ENCODE measurements at regions of chr14 and their contacts with region 1.

Region 1: DNA sequence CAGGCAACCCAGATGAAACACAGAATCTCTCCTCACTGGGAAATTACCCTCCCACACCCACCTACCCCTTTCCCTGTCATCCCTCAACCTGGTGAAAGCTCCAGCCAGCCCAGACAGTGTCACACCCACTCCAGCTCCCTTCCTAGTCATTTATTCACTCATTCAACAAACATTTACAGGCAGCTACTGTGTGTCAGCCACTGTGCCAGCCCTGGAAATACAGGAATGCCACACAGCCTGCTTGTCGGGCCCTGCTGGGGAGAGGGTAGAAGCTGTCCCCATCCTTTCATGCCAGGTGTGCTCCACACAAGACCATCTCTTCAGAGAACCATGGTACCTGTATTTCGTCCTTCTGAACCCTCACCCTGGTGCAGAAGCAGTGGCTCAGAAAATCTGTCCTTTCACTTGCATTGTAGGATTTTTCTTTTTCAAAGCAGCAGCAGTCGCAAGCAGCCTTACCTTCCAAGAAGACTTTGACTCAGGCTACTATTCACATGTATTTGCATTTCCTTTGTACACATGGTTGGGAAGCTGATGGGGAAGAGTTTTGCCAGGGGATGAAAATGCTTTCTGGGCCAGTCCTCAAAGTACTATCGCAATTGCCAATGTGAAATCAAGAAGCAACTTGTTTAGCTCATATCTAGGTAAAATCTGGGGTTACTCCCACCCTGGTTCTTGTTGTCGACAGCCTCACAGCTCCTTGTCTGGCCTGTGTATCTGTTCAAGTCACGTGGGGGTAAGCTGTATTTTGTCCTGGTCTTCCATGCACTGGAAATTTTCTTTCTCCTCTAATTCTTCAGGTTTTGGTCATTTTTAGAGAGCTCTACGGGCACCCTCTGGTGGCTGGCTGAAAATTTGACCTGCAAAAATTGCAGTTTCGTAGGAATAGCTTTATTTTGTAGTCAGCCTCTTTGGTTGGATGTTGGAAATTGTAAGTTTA is 147.4 kb upstream of the EGLN3 start:
- DNase-seq: peak; percentile 39
- CTCF ChIP-seq: peak; percentile 61

Region 2: DNA sequence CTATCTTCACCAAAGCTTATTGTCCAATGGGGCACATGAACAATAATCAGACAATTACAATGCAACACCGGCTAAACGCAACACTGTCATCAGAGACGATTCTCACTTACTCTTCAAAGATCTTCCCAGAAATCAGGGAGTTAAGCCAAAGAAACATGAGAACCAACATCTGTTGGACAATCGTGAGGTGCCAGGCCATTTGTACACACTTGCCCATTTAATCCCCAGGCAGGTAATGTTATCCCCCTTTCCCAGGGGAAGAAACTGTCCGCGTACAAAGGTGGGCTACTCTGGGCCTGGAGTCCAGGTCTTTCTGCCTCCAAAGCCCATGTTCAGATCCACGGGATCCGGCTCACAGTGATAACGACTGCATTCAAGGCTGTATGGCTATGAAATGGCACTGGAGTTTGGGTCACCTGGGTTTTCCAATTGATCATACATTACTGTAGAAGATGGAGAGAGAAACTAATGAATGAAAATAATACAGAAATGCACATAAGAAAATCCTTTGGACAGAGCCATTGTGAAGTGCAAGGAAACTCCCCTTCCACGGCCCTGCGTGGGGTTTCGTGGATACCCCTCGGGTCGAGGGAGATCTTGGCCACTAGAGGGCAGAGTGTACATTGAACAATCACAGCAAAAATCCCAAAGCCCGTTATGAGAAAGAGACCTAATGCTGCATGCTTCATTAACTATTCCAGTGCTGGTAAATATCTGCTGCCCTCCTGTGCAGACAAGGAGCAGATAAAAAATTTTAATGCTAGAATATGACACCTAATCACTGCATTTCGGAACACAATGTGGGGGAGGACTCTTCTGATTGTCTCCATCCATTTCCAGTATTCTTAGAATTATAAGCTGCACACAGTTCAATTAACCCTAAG is 258.9 kb before region 1 on chr14:
- CTCF ChIA-PET with region 1: interaction called, 85 read pairs
- POLR2A ChIA-PET with region 1: no interaction called
- DNase-seq: peak; percentile 60
- CTCF ChIP-seq: peak; percentile 63

Region 3: DNA sequence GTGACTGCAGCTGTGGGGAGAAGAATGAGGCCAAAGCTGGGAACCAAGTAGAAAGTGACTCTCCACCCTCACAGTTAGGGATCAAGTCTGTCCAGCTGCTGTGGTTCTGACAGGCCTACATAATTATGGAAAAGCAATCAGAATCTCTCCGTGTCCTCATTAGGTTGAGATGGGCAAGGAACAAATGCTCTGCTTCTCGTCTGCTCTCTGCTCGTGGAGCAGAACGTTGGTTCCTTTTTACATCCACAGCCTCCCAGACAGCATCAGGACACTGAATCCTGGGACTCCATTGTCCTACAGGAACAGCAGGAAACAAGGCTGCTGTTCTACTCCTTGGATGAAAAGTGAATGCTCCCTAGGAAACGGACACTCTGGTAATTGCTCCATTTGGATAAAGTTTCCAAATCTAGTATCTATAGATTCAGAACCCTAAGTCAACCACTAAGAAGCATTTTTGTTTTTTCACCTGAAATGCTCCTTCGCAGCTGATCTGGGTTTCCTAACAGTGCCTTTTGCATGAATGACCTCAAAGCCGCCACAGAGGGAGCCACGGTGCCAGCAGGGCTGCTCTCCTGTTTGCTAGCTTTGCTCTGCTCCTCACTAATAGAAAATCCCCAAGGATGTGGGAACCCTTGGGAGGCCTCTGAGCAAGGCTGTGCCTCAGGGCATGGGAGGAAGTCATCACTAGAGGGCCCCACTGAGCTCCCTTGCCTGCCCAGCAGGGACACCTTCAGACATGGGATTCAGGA is 249.4 kb before region 1 on chr14:
- CTCF ChIA-PET with region 1: interaction called, 85 read pairs
- POLR2A ChIA-PET with region 1: no interaction called
- DNase-seq: peak; percentile 44
- CTCF ChIP-seq: peak; percentile 47

Region 4: DNA sequence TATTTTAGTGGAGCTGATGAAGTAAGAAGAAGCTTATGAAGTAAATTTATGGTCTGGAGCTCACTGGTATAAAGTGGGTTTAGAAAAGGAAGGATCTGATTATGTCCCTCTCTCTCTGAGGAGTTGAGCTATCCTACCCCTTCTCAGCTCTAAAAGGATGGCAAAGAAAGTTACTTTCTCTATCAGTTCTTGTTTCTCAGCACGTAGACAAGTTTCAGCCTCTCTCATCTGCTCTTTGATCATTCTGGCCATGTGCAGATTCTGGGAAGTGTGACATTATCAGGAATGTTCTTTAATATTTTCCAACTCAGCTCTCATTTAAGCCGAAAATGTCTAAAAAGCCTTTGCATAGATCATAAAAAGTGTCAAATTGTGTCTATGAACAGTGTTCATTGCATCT is 141.7 kb before region 1 on chr14:
- CTCF ChIA-PET with region 1: interaction called, 12 read pairs
- POLR2A ChIA-PET with region 1: no interaction called
- DNase-seq: peak; percentile 31
- CTCF ChIP-seq: no peak

Region 5: DNA sequence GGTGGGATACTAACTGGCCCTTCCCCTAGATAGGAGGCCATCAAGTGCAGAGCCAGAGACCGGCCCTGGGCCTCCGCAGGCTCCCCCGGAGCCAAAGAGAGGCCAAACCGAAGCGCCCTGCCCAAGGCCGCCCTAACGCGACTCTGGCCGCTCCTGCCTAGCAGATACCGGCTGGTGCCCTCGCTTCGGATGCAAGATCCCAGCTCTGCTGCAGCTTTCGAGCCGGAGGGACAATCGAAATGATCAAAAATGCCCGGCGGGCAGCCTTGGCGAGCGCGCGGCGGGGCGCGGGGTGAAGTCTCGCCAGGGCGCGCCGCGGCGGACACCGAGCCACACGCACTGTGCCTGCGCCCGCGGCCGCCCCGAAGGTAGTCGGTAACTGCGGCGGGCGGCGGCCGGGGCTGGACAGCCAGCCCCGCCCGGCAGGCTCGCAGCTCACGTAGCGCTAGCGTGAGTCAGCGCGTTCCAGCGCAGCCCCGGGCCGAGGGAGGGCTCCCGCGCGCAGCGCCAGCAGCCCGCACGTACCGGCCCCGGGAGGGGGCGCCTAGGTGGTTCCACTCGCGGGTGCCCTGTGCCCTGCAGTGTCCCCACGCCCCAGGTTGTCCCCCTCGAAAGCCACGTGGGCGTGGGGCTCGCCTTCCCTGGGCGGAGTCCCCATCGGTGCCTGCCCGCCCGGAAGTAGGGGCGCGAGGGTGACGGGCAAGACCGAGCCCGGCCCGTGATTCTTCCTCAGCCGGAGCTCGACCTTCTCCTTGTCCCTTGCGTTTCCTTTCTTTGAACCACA is 38.3 kb before region 1 on chr14:
- CTCF ChIA-PET with region 1: interaction called, 39 read pairs
- POLR2A ChIA-PET with region 1: no interaction called
- DNase-seq: peak; percentile 79
- CTCF ChIP-seq: peak; percentile 23

Region 6: DNA sequence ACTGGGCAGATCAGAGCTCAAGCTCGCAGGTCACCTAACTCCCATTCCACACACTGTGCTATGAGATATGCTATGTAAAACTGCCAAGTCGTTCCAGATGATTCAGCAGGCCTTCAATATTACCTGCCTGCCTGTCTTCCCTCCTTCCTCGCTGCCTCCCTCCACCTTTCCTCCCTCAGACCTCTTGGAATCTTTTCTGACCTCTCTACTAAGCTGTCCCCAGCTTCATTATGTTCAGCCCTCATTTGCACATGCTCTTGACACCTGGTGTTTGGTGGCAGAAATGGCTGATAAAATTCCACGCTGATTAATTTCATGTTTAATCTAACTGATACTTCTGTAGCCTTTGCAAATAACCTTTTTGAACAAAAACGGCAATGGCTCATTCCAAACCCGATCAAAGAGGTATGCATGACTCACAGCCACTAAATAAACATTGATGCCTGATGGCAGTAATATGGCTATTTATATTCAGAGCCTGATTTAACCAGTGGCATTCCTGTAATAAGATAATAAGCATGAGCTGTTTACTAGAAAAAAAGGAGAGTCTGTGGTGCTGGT is 16.7 kb before region 1 on chr14:
- CTCF ChIA-PET with region 1: interaction called, 17 read pairs
- POLR2A ChIA-PET with region 1: no interaction called
- DNase-seq: no peak
- CTCF ChIP-seq: no peak

Region 7: GRCh38 chr14:34087556-34087955 is 10.8 kb before region 1 on chr14:
- CTCF ChIA-PET with region 1: interaction called, 17 read pairs
- POLR2A ChIA-PET with region 1: no interaction called
- DNase-seq: no peak
- CTCF ChIP-seq: no peak

Region 8: DNA sequence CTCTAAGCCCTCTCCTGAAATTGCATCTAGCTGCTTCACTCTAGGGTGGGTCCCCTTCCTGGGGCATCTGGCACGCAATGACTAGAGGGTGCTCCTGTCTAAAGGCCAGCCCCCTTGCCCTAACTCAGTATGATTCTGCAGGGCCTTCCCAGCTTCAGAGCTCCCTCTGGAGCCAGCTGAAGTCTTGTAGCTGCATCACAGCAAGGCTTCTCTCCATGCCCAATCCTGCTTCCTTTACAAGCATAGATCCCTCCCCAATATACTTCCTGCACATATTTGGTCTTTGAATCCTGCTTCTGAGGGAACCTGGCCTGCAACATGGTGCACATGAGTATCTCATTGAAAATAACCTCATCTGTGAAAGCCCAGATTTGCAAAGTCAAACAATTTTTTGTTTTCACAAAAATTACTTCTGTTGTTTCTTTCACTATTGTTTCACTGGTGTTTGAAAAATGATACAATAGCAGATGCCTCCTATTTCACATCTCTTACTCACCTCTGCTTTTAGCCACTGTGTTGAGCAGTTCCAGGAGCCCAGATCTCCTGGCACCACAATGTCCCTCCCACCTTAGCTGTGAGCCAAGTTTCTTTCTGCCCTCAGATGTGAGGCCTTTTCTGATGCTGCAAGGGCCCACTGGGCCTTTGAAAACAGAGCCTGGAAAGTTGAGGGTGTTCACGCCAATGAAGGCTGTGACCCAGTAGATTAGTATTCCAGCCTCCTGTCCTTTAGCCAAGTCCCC is 22.1 kb after region 1 on chr14:
- CTCF ChIA-PET with region 1: no interaction called
- POLR2A ChIA-PET with region 1: no interaction called
- DNase-seq: no peak
- CTCF ChIP-seq: no peak

Region 9: GRCh38 chr14:34161351-34162082 is 63.2 kb after region 1 on chr14:
- CTCF ChIA-PET with region 1: no interaction called
- POLR2A ChIA-PET with region 1: no interaction called
- DNase-seq: no peak
- CTCF ChIP-seq: no peak